ENCODE measurements at regions of chr2 and their contacts with region 1.

Region 1: DNA sequence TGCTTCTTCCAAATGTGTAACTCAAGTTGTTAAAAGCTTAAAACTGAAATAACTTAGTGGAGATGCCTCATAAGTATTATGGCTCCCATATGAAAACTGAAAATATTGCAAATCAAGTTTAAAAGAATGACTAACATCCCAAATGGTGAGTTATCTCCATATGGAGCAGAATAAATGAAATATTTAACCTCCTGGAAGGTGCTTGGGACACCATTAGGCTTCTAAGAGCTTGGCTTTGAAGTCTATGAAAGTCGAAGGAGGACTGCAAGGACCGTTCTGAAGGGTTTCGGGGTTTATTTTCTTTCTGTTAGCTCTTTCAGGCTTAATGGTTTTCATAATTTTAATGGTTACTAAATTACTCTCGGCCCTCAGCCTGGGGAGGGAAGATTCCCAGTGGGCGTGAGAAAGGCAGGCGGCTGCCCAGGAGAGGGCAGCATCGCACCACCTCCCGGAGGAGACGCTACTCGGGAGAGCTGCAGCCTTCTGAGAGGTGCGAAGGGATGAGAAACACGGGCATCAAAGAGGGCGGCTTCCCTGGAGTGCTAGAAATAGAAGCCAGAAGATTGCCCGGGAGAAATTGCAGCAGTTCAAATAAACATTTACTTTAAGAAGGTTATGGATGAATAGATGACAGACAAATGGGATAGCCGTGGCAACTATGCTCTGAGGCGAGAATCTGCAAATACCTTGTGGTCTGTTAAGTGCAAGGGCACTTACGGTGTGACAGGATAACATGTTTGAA is 43.1 kb downstream of the MAP3K19 start:
- DNase-seq: peak; percentile 73
- H3K4me3 Mint-ChIP-seq: no peak overlapping the region
- H3K27ac Mint-ChIP-seq: no peak overlapping the region
- H3K4me1 Mint-ChIP-seq: peaks cover 3% of the 10 kb centered on the region
- H3K27me3 Mint-ChIP-seq: peaks cover 24% of the 10 kb centered on the region

Region 2: GRCh38 chr2:134988994-134989605 is 15.1 kb before region 1 on chr2:
- CTCF ChIA-PET with region 1: interaction called, 14 read pairs
- POLR2A ChIA-PET with region 1: no interaction called
- DNase-seq: no peak
- H3K4me3 Mint-ChIP-seq: no peak overlapping the region
- H3K27ac Mint-ChIP-seq: no peak overlapping the region
- H3K4me1 Mint-ChIP-seq: no peaks in the 10 kb centered on the region
- H3K27me3 Mint-ChIP-seq: peaks cover 26% of the 10 kb centered on the region

Region 3: DNA sequence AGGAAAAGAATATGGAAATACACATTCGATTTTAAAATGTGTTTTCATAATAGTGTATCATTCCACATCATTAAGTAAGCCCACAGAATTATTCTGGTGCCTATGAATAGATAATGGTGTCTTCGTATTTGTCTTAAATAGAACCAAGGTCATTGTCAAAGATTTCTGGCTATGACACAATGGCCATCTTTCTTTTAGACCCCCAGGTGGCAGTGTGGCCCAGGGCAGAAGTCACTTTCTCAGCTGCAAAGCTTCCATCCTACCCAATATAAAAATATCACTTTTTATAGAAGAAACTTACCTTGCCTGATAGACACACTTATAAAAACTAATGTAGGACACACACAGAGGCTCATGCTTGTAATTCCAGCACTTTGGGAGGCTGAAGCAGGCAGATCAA is 469.4 kb after region 1 on chr2:
- CTCF ChIA-PET with region 1: interaction called, 14 read pairs
- POLR2A ChIA-PET with region 1: no interaction called
- DNase-seq: peak; percentile 31
- H3K4me3 Mint-ChIP-seq: no peak overlapping the region
- H3K27ac Mint-ChIP-seq: no peak overlapping the region
- H3K4me1 Mint-ChIP-seq: no peaks in the 10 kb centered on the region
- H3K27me3 Mint-ChIP-seq: no peaks in the 10 kb centered on the region

Region 4: DNA sequence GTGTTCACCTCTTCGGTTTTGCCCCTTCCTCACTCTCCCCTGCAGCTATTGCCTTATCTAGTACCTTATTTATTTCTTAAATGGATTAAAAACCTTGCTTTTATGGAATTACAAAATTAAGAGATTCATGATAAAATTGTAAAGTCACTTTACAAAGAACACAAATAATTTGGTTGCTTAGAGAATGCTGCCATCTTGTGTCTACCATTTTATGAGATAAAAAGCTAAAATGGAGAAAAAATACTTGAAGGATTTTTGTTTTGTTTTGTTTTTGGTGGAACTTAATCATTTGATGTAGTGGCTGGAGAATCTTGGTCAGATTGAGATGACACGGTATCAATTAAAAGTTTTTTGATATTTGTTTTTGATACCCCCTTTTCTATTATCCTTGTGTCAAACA is 596.7 kb after region 1 on chr2:
- CTCF ChIA-PET with region 1: interaction called, 11 read pairs
- POLR2A ChIA-PET with region 1: no interaction called
- DNase-seq: no peak
- H3K4me3 Mint-ChIP-seq: no peak overlapping the region
- H3K27ac Mint-ChIP-seq: no peak overlapping the region
- H3K4me1 Mint-ChIP-seq: no peaks in the 10 kb centered on the region
- H3K27me3 Mint-ChIP-seq: no peaks in the 10 kb centered on the region

Measured in activated CD4-positive, alpha-beta memory T cell treated with anti-CD3 and anti-CD28 coated beads, Interleukin-2, amount 10 ng/mL, durations not matched to agents 7 days and 5 days (primary cell).